ENCODE measurements at regions of chr14 and their contacts with region 1.

Region 1: GRCh38 chr14:64891839-64892375 is 12.2 kb upstream of the SPTB start:
- DNase-seq: peak; percentile 52
- H3K4me3 ChIP-seq: no peak overlapping the region
- CTCF ChIP-seq: peak; percentile 42

Region 2: DNA sequence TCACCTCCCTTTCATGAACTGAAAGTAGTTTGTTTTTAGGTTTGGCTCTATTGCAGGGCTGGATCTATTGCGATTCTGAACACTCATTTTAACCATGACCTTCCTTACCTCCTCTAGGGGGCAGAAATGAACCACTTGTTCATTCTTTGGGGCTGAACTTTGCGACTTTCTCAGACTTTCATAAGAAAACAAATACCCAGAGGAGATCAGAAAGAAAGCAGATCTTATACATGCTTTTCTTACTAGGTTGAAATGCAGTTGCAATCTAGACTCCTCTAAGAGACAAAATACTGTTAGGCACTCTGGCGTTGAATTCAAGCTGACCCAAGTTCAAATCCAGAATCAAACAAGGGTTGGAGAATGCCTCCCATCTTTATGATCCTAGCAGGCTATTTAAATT is 220.3 kb before region 1 on chr14:
- in situ Hi-C with region 1: loop called (anchors 25 kb)
- DNase-seq: peak; percentile 58
- H3K4me3 ChIP-seq: no peak overlapping the region
- CTCF ChIP-seq: peak; percentile 75